GM10248 (cell line): ENCODE measurements at regions of chr14 and their contacts with region 1.

Region 1: DNA sequence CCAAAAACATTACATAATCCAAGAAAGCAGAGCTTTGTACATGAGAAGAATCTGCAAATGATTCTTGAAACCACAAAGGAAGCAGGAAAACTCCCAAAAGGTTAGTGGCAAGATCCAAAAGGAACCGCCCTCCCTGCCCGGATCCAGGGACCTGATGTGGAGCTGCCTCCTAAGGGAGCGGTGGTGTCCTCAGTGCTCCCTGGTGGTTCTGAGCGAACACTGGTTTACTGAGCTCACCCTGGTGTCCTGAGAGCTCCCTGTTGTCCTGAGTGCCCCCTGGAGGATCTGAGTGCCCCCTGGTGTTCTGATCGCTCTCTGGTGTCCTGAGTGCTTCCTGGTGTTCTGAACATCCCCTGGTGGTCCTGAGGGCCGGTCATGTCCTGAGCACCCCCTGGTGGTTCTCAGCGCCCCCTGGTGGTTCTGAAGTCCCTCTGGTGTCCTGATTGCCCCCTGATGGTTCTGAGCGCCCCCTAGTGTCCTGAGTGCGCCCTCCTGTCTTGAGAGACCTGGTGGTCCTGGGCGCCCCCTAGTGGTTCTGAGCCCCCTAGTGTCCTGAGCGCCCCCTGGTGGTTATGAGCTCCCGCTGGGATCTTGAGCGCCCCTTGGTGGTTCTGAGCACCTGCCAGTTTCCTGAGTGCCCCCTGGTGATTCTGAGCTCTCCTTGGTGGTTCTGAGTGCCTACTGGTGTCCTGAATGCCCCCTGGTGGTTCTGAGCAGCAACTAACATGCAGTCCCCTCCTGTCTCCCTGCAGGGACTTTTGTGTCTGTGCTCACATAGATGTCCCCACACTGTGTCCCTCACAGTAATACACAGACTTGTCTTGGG is 891.1 kb downstream of the TMEM121 start:
- DNase-seq: peak; percentile 75
- CTCF ChIP-seq: peak; percentile 100

Region 2: GRCh38 chr14:105549481-105549880 is 868.0 kb before region 1 on chr14:
- CTCF ChIA-PET with region 1: interaction called, 22 read pairs
- POLR2A ChIA-PET with region 1: no interaction called
- DNase-seq: no peak
- CTCF ChIP-seq: no peak

Region 3: GRCh38 chr14:106228541-106229158 is 188.8 kb before region 1 on chr14:
- CTCF ChIA-PET with region 1: no interaction called
- POLR2A ChIA-PET with region 1: no interaction called
- DNase-seq: no peak
- CTCF ChIP-seq: no peak

Region 4: DNA sequence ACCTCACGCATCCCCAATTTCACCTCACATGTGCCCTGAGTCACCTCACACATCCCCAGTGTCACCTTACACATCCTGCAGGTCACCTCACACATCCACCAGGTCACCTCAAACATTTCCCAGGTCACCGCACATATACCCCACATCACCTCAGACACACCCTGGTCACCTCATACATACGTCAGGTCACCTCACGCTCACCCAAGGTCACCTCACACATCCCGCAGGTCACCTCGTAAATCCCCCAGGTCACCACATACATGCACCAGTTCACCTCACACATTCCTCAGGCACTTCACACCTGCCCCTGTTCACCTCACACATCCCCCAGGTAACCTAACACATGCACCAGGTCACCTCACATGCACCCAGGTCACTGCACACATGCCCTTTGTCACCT is 27.0 kb before region 1 on chr14:
- CTCF ChIA-PET with region 1: interaction called, 115 read pairs
- POLR2A ChIA-PET with region 1: no interaction called
- DNase-seq: no peak
- CTCF ChIP-seq: no peak

Region 5: GRCh38 chr14:106459971-106460730 is 42.7 kb after region 1 on chr14:
- CTCF ChIA-PET with region 1: interaction called, 210 read pairs
- POLR2A ChIA-PET with region 1: no interaction called
- DNase-seq: peak; percentile 38
- CTCF ChIP-seq: peak; percentile 9

Region 6: GRCh38 chr14:106530423-106531107 is 113.1 kb after region 1 on chr14:
- CTCF ChIA-PET with region 1: interaction called, 174 read pairs
- POLR2A ChIA-PET with region 1: no interaction called
- DNase-seq: peak; percentile 25
- CTCF ChIP-seq: peak; percentile 81

Region 7: GRCh38 chr14:106599209-106599608 is 181.8 kb after region 1 on chr14:
- CTCF ChIA-PET with region 1: interaction called, 16 read pairs
- POLR2A ChIA-PET with region 1: no interaction called
- DNase-seq: no peak
- CTCF ChIP-seq: no peak